Right ventricle myocardium inferior (tissue), 1 donor: ENCODE measurements at regions of chr12 and their contacts with region 1.

Region 1: GRCh38 chr12:110600254-110600653 is 13.7 kb upstream of the TCTN1 start:
- DNase-seq: no peak
- ATAC-seq: peak; percentile 51

Region 2: GRCh38 chr12:110431957-110432587 is 168.2 kb before region 1 on chr12:
- intact Hi-C with region 1: no loop called
- DNase-seq: no peak
- ATAC-seq: no peak

Region 3: DNA sequence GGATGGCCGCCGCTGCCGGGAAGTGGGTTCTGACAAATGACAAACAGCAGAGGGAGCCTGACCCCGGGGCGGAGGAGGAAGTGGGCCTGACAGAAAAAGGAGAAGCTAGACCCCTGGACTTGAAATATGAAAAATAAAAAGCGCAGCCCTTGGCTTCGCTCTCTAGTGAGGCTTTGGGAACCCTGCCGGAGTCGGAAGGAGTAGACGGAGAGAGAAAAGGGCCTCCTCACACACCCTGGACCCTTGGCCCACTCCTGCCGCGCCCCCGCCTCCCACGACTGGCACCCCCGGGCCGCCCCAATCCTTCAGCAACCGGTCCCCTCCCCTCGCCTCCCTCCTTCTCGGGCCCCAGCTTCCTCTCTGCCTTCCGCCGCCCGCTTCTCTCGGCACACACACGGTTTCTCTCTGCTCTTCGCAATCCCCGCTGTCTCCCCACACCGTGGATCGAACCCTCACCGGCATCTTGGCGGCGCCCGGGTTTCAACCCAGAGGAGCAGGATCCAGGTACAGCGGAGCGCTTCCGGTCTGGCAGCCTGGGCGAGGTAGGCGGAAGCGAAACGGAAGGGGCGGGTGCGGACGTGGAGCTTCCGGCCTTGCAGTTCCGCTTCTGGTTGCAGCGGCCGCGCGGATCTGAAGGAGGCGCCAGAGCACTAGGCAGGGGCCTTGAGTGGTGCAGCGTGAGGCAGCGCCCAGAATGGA is 150.3 kb before region 1 on chr12 and contains the start of gene ARPC3:
- intact Hi-C with region 1: loop called (anchors 5 kb)
- DNase-seq: peak; percentile 98
- ATAC-seq: peak; percentile 99
- total RNA-seq, gene ARPC3: 94.4 TPM

Region 4: DNA sequence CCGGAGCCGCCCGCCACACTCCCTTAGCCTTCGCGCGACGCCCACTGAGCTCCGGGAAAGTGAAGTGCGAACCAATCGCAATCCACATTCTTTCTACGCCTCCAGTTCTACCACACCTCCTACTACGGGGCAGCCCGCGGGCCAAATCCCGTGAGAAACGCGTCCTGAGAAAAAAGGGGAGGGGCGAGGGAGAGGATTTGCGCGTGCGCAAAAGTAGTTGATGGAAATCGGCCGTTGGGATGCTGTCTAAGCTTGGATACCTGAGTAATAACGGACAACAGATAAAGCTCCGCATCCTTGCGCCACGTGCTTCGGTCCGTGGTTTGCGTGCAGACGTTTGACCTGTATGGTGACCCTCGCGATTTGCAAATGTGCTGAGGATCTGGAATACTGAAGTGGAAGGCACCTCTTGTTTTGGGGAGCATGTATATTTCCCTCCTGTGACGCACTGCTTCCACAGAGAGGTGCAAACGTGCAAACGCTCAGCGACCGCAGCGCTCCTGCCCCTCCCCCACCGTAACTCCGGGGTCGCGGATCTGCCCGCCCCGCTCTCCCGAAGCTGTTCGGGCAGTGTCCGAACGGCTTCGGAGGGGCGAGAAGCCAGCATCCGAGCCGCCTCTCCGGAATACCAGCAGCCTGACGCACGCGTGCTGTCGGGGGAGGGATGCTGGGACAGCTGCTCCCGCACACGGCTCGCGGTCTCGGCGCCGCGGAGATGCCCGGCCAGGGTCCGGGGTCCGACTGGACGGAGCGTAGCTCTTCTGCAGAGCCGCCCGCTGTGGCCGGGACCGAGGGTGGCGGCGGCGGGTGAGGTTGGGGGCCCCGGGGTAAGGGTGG is 131.8 kb before region 1 on chr12 and contains the starts of genes FAM216A and GPN3:
- intact Hi-C with region 1: loop called (anchors 2 kb)
- DNase-seq: peak; percentile 98
- ATAC-seq: peak; percentile 96
- total RNA-seq, gene FAM216A: 4.8 TPM
- total RNA-seq, gene GPN3: 24.7 TPM

Region 5: GRCh38 chr12:110508071-110508586 is 92.1 kb before region 1 on chr12:
- intact Hi-C with region 1: loop called (anchors 1 kb)
- DNase-seq: no peak
- ATAC-seq: no peak

Region 6: GRCh38 chr12:110639336-110640141 is 39.3 kb after region 1 on chr12:
- intact Hi-C with region 1: no loop called
- DNase-seq: no peak
- ATAC-seq: no peak